ENCODE measurements at regions of chr2 and their contacts with region 1.

Region 1: DNA sequence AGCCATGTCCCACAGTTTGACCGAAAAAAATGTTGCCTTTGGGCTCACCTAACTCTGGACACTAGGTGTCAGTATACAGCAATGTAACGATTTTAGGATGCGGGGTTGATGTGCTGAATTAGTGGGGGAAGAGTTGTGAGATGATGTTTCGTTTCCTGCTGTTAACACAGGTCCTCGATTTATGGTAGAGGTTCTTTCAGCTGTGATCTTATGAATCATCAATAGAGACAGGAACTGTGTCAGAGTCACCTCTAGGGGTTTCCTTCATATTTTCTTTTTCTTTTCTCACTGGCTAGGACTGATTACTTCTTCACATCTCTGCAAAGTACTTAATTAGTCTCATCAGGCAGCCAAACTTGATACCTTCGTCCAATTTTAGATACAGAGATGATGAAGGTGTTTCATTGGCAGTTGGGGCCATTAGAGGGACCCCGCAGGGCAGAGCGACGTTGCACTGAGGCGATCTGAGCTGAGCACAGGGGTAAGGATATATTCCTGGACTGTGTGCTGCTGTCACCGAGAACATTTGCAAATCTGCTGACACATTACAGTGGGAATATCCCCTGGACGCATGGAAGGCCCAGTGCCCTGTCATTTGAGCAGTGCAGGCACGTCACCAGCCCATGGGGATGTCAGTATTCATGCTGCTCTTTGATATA is 10.2 kb upstream of the MMADHC start:
- DNase-seq: peak; percentile 56
- H3K4me3 ChIP-seq: no peak overlapping the region
- H3K27ac ChIP-seq: no peak overlapping the region
- H3K4me1 ChIP-seq: no peaks in the 10 kb centered on the region
- H3K27me3 ChIP-seq: no peaks in the 10 kb centered on the region
- CTCF ChIP-seq: peak; percentile 60

Region 2: DNA sequence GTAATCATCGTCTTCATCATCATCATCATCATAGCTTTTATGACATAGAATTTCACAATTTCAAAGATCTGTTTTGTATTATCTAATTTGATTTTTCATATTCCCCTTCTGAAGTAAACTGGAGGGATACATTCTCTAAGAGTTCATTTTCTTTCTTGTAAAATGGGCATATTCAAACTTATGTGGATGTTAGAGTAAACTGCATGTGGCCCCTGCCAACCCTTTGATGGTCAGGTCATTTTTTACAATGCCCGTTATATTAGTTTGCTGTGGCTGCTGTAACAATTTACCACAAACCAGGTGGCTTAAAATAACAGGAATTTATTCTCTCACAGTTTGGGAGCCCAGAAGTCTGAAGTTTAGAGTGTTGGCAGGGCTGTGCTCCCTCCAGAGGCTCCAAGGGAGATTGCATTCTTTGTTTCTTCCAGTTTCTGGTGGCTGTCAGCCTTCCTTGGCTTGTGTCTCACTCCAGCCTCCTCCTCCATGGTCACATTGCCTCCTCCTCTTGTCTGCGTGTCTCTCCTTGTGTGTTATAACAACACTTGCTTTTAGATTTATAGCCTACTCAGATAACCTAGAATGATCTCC is 117.3 kb after region 1 on chr2:
- intact Hi-C with region 1: loop called (anchors 10 kb)
- DNase-seq: no peak
- H3K4me3 ChIP-seq: no peak overlapping the region
- H3K27ac ChIP-seq: no peak overlapping the region
- H3K4me1 ChIP-seq: no peaks in the 10 kb centered on the region
- H3K27me3 ChIP-seq: no peaks in the 10 kb centered on the region
- CTCF ChIP-seq: peak; percentile 28

Region 3: DNA sequence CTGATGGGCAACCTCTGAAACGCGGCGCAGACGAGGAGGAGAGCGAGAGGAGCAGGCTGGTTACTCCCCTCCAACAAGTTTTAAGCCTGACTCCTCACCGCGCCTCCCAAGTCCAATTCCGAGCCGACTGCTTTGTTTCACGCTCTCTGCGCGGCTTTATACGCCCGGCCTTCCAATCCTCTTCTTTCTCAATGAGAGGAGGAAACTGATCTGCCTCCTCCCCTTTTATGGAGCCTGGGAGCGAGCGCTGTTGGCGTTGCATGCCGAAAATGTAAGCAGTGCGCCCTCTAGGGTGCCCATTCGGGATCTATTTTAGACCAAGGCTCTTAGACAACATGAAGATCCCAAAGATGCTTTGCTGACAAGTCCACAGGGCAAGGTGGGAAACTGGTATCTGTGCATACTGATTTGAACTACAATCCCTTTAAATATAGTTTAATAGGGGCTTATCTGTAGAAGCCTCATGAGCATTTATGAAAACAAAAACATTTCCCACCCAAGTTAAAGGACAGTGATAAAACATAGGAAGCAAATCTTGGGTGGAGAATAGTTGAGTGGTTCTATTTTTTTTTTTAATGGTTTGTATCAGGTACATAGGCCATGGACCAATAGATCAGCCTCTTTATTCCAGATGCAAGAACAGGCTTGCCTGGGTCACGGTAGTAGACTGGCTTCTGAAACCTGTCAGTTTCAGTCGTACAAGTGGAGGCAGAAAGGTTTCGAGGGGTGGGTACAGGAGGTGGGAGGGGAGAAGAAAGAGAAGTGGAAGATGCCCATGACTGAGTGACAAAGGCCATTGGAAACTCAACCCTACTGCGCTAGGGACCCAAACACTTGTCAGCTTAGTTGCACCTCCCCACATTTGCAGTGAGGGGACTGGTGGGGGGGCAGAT is 890.0 kb after region 1 on chr2 and contains the start of gene RND3:
- intact Hi-C with region 1: loop called (anchors 5 kb)
- DNase-seq: peak; percentile 98
- H3K4me3 ChIP-seq: peak within 1 kb of the TSS; percentile 62
- H3K27ac ChIP-seq: peak within 1 kb of the TSS; percentile 92
- H3K4me1 ChIP-seq: peaks cover 6% of the 10 kb centered on the region
- H3K27me3 ChIP-seq: no peaks in the 10 kb centered on the region
- CTCF ChIP-seq: peak; percentile 74
- total RNA-seq, gene RND3: 26.8 to 57.1 TPM

Region 4: DNA sequence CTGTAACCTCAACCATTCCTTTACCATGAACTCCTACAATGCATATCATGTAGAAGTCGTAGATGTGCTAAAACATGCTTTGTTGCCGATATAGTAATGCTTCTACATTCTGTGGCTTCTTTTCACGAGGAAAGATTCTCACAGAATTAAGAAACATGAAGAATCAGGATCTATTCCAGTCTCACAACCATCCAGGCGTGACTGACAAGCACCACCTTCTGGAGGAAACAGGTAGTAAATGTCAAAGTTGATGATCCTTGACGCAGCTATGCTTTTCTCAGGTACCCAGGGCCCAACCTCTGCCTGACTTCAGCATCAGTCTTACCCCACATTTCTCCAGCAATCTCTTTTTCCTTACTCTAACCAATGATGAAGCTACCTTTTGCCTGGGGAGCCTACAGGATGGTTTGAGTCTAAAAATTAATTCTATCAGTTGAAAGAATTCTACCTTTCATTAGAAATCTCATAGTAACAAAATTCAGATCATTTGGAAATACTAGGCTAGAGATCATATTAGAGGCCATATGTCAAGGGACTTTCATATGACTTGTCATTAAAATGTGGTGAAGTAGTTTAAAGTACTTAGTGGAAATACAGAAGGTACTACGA is 1013.0 kb after region 1 on chr2:
- intact Hi-C with region 1: loop called (anchors 5 kb)
- DNase-seq: peak; percentile 37
- H3K4me3 ChIP-seq: no peak overlapping the region
- H3K27ac ChIP-seq: no peak overlapping the region
- H3K4me1 ChIP-seq: no peaks in the 10 kb centered on the region
- H3K27me3 ChIP-seq: no peaks in the 10 kb centered on the region
- CTCF ChIP-seq: peak; percentile 61

Region 5: GRCh38 chr2:151238527-151239487 is 1641.0 kb after region 1 on chr2:
- intact Hi-C with region 1: loop called (anchors 10 kb)
- DNase-seq: peak; percentile 36
- H3K4me3 ChIP-seq: no peak overlapping the region
- H3K27ac ChIP-seq: no peak overlapping the region
- H3K4me1 ChIP-seq: no peaks in the 10 kb centered on the region
- H3K27me3 ChIP-seq: no peaks in the 10 kb centered on the region
- CTCF ChIP-seq: peak; percentile 72